ENCODE measurements at regions of chr22 and their contacts with region 1.

Region 1: GRCh38 chr22:39003165-39003638 is 10.9 kb upstream of the APOBEC3C start:
- DNase-seq: peak; percentile 70 to 88 (median 87)
- H3K4me3 ChIP-seq: no peak overlapping the region
- H3K27ac ChIP-seq: no peak overlapping the region
- H3K4me1 ChIP-seq: peaks cover 0 to 7% of the 10 kb centered on the region in 2 donors
- H3K27me3 ChIP-seq: no peaks in the 10 kb centered on the region
- CTCF ChIP-seq: peak; percentile 71 to 91 (median 82)
- POLR2A ChIP-seq: no peak

Region 2: DNA sequence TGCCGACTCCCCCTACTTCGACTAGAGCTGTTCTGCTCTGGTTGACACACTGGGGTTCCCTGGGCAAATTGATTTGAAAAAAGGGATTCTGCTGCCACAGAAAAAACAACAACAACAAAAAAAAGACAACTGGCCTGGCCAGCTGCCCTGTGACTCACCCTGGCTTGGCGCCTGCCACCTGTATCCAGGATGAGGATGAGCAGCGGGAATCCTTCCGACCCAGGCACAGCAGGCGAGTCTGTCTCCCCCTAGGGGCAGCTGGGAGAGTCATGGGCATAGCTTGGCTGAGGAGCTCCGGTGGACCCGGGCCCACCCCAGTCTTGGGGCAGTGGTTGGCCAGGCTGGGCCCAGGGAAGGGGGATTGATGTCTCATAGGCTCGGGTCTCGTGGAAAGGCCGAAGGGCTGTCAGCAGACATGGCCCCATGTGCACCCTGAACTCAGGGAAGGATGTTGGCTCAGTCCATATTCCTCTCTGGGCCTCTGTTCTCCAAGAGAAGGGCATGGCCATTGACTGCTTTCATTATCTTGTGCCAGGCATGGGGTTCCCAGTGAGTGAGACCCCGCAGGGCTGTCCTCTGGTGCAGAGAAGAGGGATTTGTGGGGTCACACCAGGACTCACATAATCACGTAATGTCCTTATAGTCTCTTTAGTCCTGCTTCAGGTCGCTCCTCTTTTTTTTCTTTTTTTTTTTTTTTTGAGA is 237.0 kb before region 1 on chr22:
- intact Hi-C with region 1: loop called (anchors 10 kb)
- DNase-seq: peak; percentile 83 to 93 (median 90)
- H3K4me3 ChIP-seq: no peak overlapping the region
- H3K27ac ChIP-seq: no peak overlapping the region
- H3K4me1 ChIP-seq: no peaks in the 10 kb centered on the region
- H3K27me3 ChIP-seq: no peaks in the 10 kb centered on the region
- CTCF ChIP-seq: peak; percentile 68 to 81 (median 79)
- POLR2A ChIP-seq: no peak

Region 3: GRCh38 chr22:38777087-38777671 is 226.0 kb before region 1 on chr22:
- intact Hi-C with region 1: loop called in 1 of 2 experiments (anchors 10 kb)
- DNase-seq: no peak
- H3K4me3 ChIP-seq: no peak overlapping the region
- H3K27ac ChIP-seq: no peak overlapping the region
- H3K4me1 ChIP-seq: no peaks in the 10 kb centered on the region
- H3K27me3 ChIP-seq: no peaks in the 10 kb centered on the region
- CTCF ChIP-seq: no peak
- POLR2A ChIP-seq: no peak

Region 4: DNA sequence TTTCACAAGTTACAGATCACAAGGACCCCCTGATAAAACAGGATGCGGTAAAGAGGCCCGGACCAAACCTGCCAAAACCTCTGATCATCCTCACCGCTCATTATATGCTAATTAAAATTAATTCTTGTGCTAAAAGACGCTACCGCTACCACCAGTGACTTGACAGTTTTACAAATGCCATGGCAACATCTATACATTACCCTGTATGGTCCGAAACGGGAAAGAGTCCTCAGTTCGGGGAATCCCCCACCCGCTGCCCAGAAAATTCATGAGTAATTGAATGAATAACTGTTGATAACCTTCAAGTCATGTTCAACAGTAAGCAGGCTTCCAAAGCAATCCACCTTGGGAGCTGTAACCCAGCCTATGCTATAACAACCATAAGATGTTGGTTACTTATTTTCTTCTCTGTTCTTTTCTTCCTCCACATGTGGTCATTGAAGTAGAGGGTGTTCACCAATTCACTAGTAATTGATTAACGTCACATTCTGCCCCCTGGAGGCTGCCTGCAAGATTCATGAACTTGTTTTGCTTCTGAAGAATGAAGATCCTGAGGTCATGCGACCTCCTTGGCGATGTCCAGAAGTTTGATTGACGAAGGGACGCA is 114.5 kb after region 1 on chr22:
- intact Hi-C with region 1: loop called in 1 of 2 experiments (anchors 5 kb)
- DNase-seq: peak in 6 of 7 donors; percentile 51 to 84 (median 68)
- H3K4me3 ChIP-seq: no peak overlapping the region
- H3K27ac ChIP-seq: no peak overlapping the region
- H3K4me1 ChIP-seq: no peaks in the 10 kb centered on the region
- H3K27me3 ChIP-seq: no peaks in the 10 kb centered on the region
- CTCF ChIP-seq: peak; percentile 23 to 65 (median 52)
- POLR2A ChIP-seq: no peak

Region 5: DNA sequence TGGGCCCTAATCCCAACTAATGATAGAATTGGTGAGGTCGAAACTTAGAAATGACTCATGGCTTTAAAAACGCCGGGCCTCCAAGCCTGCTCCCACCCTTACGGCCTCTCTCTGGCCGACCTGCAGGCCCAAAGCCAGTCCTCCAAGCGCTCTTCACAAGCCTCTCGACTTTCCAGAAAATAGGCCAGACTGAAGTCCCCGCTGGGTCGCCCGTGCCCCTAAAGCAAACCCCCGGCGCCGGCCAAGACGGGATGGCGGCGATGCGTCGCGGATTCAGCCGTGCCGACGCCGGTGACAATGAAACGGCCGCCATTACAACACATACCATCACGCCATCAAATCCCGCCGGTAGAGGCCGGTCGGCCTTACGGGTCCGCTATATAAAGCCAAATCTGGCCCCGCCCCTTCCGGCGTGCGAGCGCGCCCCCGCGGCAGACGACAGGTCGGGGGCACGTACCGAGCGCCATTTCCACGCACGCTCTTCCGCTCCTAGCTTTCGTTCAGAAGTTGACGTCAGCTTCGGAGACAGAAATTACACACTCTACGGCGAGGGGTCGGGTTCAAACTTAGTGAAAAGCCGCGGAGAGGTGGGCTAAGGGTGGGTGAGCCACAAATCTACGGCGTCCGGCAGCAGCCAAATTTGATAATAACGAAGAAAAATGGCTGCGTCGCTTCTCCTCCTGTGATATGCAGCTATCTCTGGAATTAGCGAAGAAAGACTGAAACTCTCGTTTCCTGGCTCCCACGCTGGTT is 316.2 kb after region 1 on chr22 and contains the start of gene RPL3:
- intact Hi-C with region 1: loop called in 1 of 2 experiments (anchors 10 kb)
- DNase-seq: peak; percentile 95 to 98 (median 97)
- H3K4me3 ChIP-seq: peak within 1 kb of the TSS; percentile 49 to 93 (median 76)
- H3K27ac ChIP-seq: peak within 1 kb of the TSS; percentile 98 to 99 (median 99)
- H3K4me1 ChIP-seq: peaks cover 38% of the 10 kb centered on the region in 2 donors
- H3K27me3 ChIP-seq: no peaks in the 10 kb centered on the region
- CTCF ChIP-seq: peak in 3 of 6 experiments; percentile 7 to 30 (median 29)
- POLR2A ChIP-seq: peak; percentile 89 to 95
- total RNA-seq, gene RPL3: 1,374 to 2,518 (median 1,917) TPM

Measured in adrenal gland (tissue), 19 donors.